BJ (cell line): ENCODE measurements at regions of chr5 and their contacts with region 1.

Region 1: DNA sequence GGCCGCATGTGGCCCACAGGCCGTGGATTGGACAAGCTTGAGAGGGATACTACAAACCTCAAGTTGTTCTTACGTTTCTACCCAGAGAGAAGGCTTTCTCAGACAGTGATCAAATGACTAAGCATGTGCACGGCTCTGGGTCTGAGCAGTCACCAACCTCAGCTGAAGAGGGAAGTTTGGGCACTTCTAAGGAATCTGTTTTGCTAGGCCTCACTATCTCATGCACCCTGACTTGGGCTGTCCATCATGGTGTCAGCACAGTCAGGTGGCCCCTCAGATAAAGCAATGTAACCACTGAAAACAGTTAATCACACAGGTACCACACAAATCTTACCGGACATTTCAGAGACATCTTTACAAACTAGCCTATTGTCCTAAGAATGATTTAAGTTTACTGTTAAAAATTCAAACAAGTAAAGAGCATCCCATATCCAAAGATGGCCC is 24.6 kb downstream of the CSF2 start:
- DNase-seq: no peak
- H3K4me3 ChIP-seq: no peak overlapping the region
- H3K27me3 ChIP-seq: no peaks in the 10 kb centered on the region
- CTCF ChIP-seq: no peak

Region 2: DNA sequence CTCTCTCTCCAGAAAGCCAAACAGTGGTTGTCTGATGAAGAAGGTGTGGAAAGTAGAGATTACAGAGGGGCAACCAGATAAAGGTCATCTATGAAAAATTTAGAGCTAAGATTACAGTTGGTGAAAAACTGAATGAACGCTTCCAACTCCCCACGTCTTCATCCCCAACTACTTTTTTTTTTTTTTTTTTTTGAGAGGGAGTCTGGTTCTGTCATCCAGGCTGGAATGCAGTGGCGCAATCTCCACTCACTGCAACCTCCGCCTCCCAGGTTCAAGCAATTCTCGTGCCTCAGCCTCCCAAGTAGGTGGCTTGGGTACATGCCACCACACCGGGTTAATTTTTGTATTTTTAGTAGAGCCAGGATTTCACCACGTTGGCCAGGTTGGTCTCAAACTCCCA is 527.4 kb before region 1 on chr5:
- CTCF ChIA-PET with region 1: no interaction called
- POLR2A ChIA-PET with region 1: interaction called, 15 read pairs
- DNase-seq: no peak
- H3K4me3 ChIP-seq: no peak overlapping the region
- H3K27me3 ChIP-seq: no peaks in the 10 kb centered on the region
- CTCF ChIP-seq: no peak

Region 3: DNA sequence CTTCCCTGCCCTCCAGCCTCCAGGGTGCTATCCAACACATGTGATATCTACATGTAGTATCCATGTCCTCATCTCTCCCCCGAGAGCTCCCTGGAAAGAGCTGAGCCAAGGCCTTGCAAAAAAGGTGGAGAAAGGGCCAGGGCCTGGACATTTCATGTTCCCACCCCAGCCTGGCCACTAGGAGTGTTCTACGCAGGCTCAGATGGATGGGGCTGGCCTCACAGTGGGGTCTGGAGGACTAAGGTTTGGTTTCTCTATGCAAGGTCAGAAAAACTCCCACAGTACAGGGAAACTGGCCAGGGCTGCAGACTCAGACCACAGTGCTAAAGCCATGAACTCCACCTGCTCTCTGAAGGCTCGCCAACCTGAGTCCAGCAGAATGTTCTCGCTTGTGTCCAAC is 26.1 kb before region 1 on chr5:
- CTCF ChIA-PET with region 1: no interaction called
- POLR2A ChIA-PET with region 1: no interaction called
- DNase-seq: no peak
- H3K4me3 ChIP-seq: no peak overlapping the region
- H3K27me3 ChIP-seq: no peaks in the 10 kb centered on the region
- CTCF ChIP-seq: no peak